Activated CD4-positive, alpha-beta T cell treated with anti-CD3 and anti-CD28 coated beads for 36 hours (primary cell): ENCODE measurements at regions of chr10 and their contacts with region 1.

Region 1: GRCh38 chr10:52779541-52780390 is 7.2 kb upstream of the MBL2 start:
- DNase-seq: peak; percentile 74
- ATAC-seq: peak; percentile 68
- H3K4me3 Mint-ChIP-seq: no peak overlapping the region
- H3K27ac Mint-ChIP-seq: no peak overlapping the region
- H3K4me1 Mint-ChIP-seq: no peaks in the 10 kb centered on the region
- H3K27me3 Mint-ChIP-seq: peaks cover 4% of the 10 kb centered on the region

Region 2: DNA sequence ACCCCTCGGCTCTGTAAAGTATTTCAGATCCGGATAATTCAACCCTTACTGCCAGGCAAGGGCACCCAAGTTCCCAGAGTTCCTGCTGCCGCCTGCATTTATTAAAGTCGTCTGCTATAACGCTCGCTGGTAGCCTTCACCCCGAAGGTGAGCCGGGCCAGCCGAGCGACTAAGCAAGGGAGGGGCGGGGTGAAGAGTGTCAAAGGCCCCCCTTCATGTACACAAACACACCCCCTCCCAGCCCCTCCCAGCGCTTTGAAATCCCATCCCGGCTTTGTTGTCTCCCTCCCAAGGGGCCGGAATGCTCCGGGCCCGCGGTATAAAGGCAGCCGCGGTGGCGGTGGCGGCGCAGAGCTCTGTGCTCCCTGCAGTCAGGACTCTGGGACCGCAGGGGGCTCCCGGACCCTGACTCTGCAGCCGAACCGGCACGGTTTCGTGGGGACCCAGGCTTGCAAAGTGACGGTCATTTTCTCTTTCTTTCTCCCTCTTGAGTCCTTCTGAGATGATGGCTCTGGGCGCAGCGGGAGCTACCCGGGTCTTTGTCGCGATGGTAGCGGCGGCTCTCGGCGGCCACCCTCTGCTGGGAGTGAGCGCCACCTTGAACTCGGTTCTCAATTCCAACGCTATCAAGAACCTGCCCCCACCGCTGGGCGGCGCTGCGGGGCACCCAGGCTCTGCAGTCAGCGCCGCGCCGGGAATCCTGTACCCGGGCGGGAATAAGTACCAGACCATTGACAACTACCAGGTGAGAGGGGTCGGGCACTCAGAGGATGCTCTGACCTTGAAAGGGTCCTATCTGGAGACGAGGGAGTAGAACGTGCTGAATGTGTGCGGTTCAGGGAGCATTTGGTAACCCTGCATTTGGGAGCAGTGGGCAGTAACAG is 465.6 kb before region 1 on chr10 and contains the start of gene DKK1:
- CTCF ChIA-PET with region 1: no interaction called
- POLR2A ChIA-PET with region 1: no interaction called
- intact Hi-C with region 1: loop called in 1 of 2 experiments (anchors 5 kb)
- DNase-seq: peak; percentile 67
- ATAC-seq: peak; percentile 75
- H3K4me3 Mint-ChIP-seq: peak within 1 kb of the TSS; percentile 39
- H3K27ac Mint-ChIP-seq: no peak within 1 kb of the TSS
- H3K4me1 Mint-ChIP-seq: peaks cover 14% of the 10 kb centered on the region
- H3K27me3 Mint-ChIP-seq: peaks cover 53% of the 10 kb centered on the region
- total RNA-seq, gene DKK1: not detected

Region 3: GRCh38 chr10:52597189-52597863 is 182.4 kb before region 1 on chr10:
- CTCF ChIA-PET with region 1: no interaction called
- POLR2A ChIA-PET with region 1: no interaction called
- intact Hi-C with region 1: no loop called
- DNase-seq: no peak
- ATAC-seq: no peak
- H3K4me3 Mint-ChIP-seq: no peak overlapping the region
- H3K27ac Mint-ChIP-seq: no peak overlapping the region
- H3K4me1 Mint-ChIP-seq: no peaks in the 10 kb centered on the region
- H3K27me3 Mint-ChIP-seq: no peaks in the 10 kb centered on the region

Region 4: GRCh38 chr10:52644373-52645186 is 135.2 kb before region 1 on chr10:
- CTCF ChIA-PET with region 1: interaction called, 19 read pairs
- POLR2A ChIA-PET with region 1: no interaction called
- intact Hi-C with region 1: loop called (anchors 1 kb)
- DNase-seq: peak; percentile 49
- ATAC-seq: no peak
- H3K4me3 Mint-ChIP-seq: no peak overlapping the region
- H3K27ac Mint-ChIP-seq: no peak overlapping the region
- H3K4me1 Mint-ChIP-seq: no peaks in the 10 kb centered on the region
- H3K27me3 Mint-ChIP-seq: no peaks in the 10 kb centered on the region

Region 5: GRCh38 chr10:52740913-52741675 is 38.7 kb before region 1 on chr10:
- CTCF ChIA-PET with region 1: interaction called, 14 read pairs
- POLR2A ChIA-PET with region 1: no interaction called
- intact Hi-C with region 1: loop called (anchors 1 kb)
- DNase-seq: peak; percentile 65
- ATAC-seq: no peak
- H3K4me3 Mint-ChIP-seq: no peak overlapping the region
- H3K27ac Mint-ChIP-seq: no peak overlapping the region
- H3K4me1 Mint-ChIP-seq: no peaks in the 10 kb centered on the region
- H3K27me3 Mint-ChIP-seq: peaks cover 2% of the 10 kb centered on the region